RWPE1 (cell line): ENCODE measurements at regions of chr1 and their contacts with region 1.

Region 1: DNA sequence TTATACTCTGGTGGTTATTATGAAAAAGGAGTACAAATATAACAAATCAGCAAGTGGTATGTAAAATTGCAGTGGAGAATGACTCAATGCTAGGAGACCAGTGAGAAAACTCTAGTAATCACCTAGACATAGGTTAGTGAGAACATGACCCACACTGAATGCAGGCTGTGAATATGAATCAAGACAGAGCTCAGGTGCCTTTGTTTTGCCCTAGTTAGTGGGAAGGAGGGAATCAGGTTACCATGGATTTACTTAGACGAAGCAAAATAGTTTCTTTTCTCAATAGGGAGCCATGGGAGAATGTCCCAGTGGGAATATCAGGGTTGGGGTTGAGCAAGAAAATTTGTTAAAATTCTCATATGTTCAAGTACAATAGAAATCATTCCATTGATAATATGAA is 10.6 kb upstream of the GCLM start:
- DNase-seq: no peak
- H3K27ac ChIP-seq: no peak overlapping the region
- CTCF ChIP-seq: no peak

Region 2: DNA sequence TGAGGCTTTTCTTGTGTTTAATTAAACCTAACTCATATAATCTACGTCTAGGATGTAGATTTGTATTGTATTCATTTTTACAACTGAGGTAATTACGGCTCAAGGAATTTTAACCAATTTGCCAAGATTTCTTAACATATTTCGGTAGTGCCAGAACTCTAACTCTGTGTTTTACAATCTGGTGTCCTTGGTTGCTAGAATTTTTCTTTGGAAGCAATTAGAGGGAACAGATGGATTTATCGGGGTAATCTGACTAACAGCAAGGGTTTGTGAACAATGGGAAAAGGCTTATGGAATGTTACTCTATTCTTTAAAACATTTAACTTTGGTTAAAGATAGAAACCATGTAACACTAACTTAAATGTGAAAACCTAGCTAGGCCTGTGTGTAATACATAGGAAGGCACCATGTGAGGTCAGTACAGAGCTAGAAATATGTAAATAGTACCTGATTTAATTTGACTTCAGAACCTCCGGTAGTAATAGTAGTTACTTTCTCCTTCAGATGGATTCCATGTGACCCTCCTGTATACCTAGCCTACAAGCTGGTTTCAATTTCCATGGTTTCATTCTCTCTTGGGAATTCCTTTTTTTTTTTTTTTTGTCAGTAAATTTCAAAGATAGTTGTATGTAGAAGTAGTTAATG is 839.5 kb before region 1 on chr1:
- CTCF ChIA-PET with region 1: no interaction called
- POLR2A ChIA-PET with region 1: interaction called, 11 read pairs
- DNase-seq: peak; percentile 64
- H3K27ac ChIP-seq: peak overlapping the region; percentile 88
- CTCF ChIP-seq: peak; percentile 66

Region 3: GRCh38 chr1:94039514-94039870 is 119.7 kb after region 1 on chr1:
- CTCF ChIA-PET with region 1: no interaction called
- POLR2A ChIA-PET with region 1: interaction called, 15 read pairs
- DNase-seq: peak; percentile 52
- H3K27ac ChIP-seq: no peak overlapping the region
- CTCF ChIP-seq: peak; percentile 86